HCT116 (cell line): ENCODE measurements at regions of chr17 and their contacts with region 1.

Region 1: GRCh38 chr17:45228763-45229539 is 7.3 kb downstream of the FMNL1 start:
- DNase-seq: no peak
- ATAC-seq: peak; percentile 36
- H3K4me3 ChIP-seq: peak overlapping the region; percentile 4 to 8; a peak in 1 of 4 replicates
- H3K27ac ChIP-seq: peak overlapping the region; percentile 26; the same call in 1 of the 2 replicates
- H3K4me1 ChIP-seq: peaks cover 33 to 76% of the 10 kb centered on the region in 2 experiments
- H3K27me3 ChIP-seq: no peaks in the 10 kb centered on the region
- CTCF ChIP-seq: no peak
- POLR2A ChIP-seq: no peak
- RAD21 ChIP-seq: no peak

Region 2: DNA sequence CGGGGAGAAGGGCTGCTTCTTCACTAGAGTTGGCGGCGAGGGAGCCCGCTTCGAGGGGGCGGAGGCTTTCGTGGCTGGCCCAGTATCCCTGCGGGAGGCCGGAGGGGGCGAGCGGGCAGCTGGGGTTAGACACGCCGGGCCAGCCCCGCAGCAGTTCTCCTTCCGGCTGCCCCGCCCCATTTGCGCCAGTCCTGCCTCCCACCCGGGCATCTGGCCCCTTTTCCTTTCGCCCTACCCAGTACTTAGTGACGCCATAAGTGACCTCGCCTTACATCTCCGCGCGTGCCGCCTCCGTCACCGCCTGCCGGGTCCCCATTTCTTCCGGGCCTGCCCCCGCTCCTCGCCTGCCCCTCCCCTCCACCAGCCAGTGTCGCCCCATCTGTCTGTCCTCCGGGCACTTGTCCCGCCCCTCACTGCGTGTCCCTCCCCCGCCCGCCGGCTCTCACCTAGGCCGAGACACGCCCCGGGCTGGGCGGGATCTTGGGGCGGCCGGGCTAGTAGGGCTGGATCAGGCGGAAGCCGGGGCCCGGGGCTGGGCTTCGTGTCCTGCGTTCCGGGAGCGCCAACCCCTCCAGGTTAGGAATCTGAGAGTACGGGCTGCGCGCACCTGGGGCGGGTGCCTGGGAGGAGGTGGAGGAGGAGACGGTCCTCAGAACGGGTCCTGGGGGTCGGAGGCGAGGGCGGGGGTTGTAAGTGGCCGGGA is 18.6 kb after region 1 on chr17:
- CTCF ChIA-PET with region 1: interaction called, 12 read pairs
- POLR2A ChIA-PET with region 1: no interaction called
- RAD21 ChIA-PET with region 1: no interaction called
- intact Hi-C with region 1: loop called (anchors 1 kb)
- DNase-seq: peak; percentile 91
- ATAC-seq: peak; percentile 93
- H3K4me3 ChIP-seq: peak overlapping the region; percentile 82 to 95
- H3K27ac ChIP-seq: peak overlapping the region; percentile 94
- H3K4me1 ChIP-seq: peaks cover 11 to 19% of the 10 kb centered on the region in 2 experiments; a peak in 3 of 4 replicates
- H3K27me3 ChIP-seq: no peaks in the 10 kb centered on the region
- CTCF ChIP-seq: no peak
- POLR2A ChIP-seq: no peak
- RAD21 ChIP-seq: no peak

Region 3: DNA sequence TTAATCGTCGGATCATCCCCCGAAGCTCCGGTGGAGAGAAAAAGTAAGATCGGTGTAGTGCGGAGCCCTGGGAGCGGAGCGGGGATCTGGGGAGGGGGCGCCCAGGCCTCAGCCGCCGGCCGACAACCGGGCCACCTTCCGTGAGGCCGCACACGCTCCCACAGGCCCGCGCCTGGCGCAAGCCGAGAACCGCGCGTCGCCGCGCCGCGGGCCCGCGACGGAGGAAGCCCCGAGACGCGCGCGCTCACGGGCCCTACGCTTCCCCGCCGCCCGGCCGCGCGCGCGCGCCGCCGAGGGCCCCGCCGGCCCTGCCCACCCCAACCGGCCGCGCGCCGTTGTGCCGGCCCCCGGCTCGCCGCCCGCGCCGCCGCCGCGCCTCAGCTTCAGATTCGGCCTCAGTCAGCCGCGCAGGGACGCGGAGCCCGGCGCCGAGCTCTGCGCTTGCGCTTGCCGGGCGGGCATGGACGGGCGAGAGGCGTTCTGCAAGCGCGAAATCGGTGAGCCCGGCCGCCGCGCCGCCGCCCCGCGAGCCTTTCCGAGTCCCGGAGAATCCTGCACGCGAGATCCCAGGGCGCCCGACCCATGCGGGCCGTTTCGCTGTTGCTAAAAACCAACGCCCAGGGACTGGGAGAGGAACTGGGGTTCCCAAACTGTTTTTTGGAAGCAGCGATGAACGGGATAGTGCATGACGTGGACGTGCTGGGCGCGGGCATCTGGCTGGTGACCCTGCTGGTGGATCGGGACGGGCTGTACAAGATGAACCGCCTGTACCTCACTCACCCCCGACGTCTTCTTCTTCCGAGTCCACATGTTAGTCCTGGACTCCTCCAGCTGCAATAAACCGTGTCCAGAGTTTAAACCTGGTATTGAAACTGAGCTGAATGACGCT is 1037.9 kb after region 1 on chr17:
- CTCF ChIA-PET with region 1: no interaction called
- POLR2A ChIA-PET with region 1: no interaction called
- RAD21 ChIA-PET with region 1: no interaction called
- intact Hi-C with region 1: no loop called
- DNase-seq: peak; percentile 66
- ATAC-seq: peak; percentile 89
- H3K4me3 ChIP-seq: peak overlapping the region; percentile 84 to 93
- H3K27ac ChIP-seq: peak overlapping the region; percentile 80
- H3K4me1 ChIP-seq: peaks cover 8 to 32% of the 10 kb centered on the region in 2 experiments
- H3K27me3 ChIP-seq: no peaks in the 10 kb centered on the region
- CTCF ChIP-seq: no peak
- POLR2A ChIP-seq: peak; percentile 90
- RAD21 ChIP-seq: no peak